ENCODE measurements at regions of chr10 and their contacts with region 1.

Region 1: DNA sequence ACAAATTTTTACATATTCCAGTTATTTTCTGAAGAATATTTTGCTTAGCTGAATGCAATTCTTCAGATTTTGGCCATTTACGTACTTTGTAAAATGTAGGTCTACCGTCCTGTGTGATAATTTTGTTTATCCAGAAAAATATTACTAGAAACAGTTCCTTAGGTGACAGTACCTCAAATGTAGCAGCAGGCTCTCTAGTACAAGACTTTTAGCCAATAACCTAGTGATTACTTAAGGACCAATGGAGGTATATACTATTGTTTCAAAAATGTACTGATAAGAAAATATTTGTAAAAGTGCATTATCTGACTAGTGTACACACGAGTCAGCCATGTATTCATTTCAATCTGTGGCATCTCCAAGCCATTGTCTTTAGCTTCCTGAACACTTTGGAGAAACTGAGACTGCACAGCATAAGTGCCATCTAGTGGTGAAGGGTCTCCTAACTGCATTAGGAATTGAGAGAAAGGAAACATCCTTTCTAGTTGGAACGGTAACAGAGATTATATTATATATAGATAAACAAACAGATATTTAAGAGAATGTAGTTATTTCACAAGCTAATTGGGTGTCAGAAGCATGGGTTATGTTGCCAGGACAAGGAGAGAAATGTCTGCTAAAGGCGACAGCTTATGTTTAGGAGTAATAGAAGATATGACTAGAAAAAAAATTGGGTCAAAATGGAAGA is 23.7 kb downstream of the RTKN2 start:
- DNase-seq: peak; percentile 29
- CTCF ChIP-seq: peak; percentile 78

Region 2: DNA sequence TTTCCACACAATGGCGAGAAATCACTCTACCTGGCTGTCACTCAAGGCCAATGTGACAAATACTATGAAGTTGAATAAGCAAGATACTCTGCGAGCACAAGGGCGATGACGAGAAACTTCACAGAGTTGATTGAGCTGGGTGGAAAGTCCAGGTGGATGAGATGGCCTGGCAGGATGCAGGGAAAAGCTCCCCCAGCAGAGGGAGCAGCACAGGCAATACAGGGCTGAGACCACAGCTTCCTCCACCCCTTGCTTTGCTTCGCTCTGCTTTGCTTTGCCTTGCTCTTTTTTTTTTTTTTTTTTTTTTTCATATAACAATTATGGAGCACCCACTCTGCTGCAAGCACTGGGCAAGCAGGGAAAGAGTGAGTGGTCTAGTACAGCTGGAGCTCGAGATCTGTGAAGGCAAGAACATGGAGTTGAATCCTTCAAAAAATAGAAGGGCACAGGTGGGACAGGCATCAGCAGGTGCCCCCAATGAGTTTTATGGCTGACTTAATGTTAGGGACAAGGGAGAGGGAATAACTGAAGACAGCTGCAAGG is 493.9 kb before region 1 on chr10:
- CTCF ChIA-PET with region 1: interaction called, 24 read pairs
- POLR2A ChIA-PET with region 1: no interaction called
- DNase-seq: peak; percentile 53
- CTCF ChIP-seq: peak; percentile 69

Region 3: GRCh38 chr10:61896854-61897661 is 347.9 kb before region 1 on chr10:
- CTCF ChIA-PET with region 1: interaction called, 49 read pairs
- POLR2A ChIA-PET with region 1: no interaction called
- DNase-seq: peak; percentile 86
- CTCF ChIP-seq: peak; percentile 65

Region 4: DNA sequence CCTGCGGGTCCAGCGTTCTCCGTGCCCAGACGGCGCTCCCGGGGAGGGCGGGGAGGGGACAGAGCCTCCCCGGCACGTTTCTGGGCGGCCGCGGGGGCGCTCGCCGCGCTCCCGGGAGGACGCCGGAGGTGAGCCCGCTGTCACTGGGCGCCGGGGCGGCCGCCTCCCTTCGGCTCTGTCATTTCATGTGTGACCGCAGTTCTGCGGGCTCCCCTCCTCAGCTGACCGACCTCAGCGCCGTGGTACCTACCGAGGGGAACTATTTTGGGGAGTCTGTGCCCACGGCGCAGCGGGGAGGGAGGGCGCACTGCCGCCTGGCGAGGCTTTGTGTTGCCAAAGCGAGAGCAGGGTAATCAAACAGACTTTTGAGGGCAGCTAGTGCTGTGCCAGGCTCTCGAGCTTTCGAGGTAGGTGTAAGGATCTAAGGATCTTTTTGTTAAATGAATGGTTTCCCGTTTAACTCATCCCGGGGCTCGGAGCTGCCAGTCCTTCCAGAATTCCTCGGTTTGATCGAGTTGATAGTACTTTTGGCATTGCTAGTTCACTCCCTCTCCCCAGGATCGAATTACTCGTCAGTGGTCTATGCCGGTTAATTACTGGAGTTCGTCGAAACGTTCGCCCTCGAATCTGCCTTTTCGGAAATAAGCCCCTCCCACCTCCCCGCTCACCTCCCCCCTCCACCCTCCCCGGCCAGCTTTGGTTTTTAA is 341.6 kb before region 1 on chr10:
- CTCF ChIA-PET with region 1: interaction called, 49 read pairs
- POLR2A ChIA-PET with region 1: interaction called, 3 read pairs
- DNase-seq: peak; percentile 69
- CTCF ChIP-seq: no peak

Region 5: DNA sequence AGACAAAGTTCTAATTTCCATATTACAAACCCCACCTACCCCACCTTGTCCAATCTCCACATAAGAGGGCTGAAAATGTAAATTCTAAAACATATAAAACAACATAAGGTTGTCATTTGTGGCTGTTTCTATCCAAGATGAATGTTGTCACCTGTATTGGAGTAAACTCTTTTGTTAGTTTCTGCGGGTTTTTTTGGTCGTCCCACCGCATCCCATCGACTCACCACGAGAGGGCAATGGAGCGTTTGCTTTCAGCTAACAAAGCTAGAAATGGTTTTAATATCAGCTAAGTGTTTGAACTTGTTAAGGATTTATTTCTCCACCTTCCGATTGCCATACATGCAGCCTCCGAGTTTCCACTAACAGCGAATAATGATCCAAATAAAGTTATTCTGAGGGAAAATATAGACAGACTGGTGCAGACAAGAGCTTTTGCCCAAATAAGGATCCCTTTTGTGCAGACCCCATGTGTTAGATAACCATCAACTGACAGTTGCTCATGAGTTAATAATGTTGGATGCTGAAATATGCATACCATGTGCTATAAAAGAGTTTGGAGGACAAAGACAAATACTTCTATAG is 206.2 kb before region 1 on chr10:
- CTCF ChIA-PET with region 1: interaction called, 147 read pairs
- POLR2A ChIA-PET with region 1: no interaction called
- DNase-seq: peak; percentile 63
- CTCF ChIP-seq: peak; percentile 82

Region 6: GRCh38 chr10:62050893-62051433 is 194.0 kb before region 1 on chr10:
- CTCF ChIA-PET with region 1: interaction called, 20 read pairs
- POLR2A ChIA-PET with region 1: no interaction called
- DNase-seq: peak; percentile 47
- CTCF ChIP-seq: no peak

Region 7: GRCh38 chr10:62264702-62265436 is 19.9 kb after region 1 on chr10:
- CTCF ChIA-PET with region 1: interaction called, 10 read pairs
- POLR2A ChIA-PET with region 1: no interaction called
- DNase-seq: peak; percentile 24
- CTCF ChIP-seq: peak; percentile 52

Measured in GM10248 (cell line).